ENCODE measurements at regions of chr11 and their contacts with region 1.

Region 1: GRCh38 chr11:77127232-77127911 is 674 bp upstream of the MYO7A start:
- DNase-seq: peak; percentile 64
- ATAC-seq: peak; percentile 87
- H3K4me3 Mint-ChIP-seq: no peak overlapping the region
- H3K27ac Mint-ChIP-seq: no peak overlapping the region
- H3K4me1 Mint-ChIP-seq: peaks cover 3% of the 10 kb centered on the region
- H3K27me3 Mint-ChIP-seq: peaks cover 13% of the 10 kb centered on the region

Region 2: GRCh38 chr11:77107950-77108349 is 19.4 kb before region 1 on chr11:
- CTCF ChIA-PET with region 1: interaction called, 15 read pairs
- DNase-seq: no peak
- ATAC-seq: no peak
- H3K4me3 Mint-ChIP-seq: no peak overlapping the region
- H3K27ac Mint-ChIP-seq: no peak overlapping the region
- H3K4me1 Mint-ChIP-seq: no peaks in the 10 kb centered on the region
- H3K27me3 Mint-ChIP-seq: peaks cover 3% of the 10 kb centered on the region

Region 3: DNA sequence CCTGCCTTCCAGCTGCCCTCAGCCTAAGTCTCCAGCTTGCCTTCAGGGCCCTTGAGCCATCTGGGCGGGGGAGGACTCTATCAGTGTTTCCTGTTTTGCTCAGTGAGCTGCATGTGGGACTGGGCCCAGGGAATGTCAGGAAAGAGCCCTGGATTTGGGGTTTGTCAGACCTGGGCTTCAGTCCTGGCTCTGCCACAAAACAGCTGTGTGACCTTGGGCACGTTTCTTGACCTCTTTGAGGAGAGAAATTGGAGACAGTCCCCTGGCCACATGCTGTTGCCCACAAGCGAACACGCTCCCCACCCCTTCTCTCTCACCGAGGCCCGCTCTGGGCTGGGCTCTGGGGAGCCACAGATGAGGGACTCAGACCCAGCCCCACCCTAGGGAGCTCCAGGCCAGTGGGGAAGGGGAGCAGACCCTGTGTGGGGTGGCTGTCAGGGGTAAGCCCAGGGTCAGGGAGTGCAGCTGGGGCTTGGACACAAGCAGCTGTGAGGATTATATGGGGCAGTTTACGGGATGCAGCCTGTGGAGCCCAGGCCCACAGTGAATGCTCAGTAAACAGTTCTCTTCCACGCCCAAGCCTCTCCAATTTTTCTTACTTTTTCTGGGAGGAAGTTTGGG is 13.0 kb after region 1 on chr11:
- CTCF ChIA-PET with region 1: interaction called, 44 read pairs
- DNase-seq: no peak
- ATAC-seq: no peak
- H3K4me3 Mint-ChIP-seq: no peak overlapping the region
- H3K27ac Mint-ChIP-seq: no peak overlapping the region
- H3K4me1 Mint-ChIP-seq: peaks cover 40% of the 10 kb centered on the region
- H3K27me3 Mint-ChIP-seq: peaks cover 56% of the 10 kb centered on the region

Region 4: DNA sequence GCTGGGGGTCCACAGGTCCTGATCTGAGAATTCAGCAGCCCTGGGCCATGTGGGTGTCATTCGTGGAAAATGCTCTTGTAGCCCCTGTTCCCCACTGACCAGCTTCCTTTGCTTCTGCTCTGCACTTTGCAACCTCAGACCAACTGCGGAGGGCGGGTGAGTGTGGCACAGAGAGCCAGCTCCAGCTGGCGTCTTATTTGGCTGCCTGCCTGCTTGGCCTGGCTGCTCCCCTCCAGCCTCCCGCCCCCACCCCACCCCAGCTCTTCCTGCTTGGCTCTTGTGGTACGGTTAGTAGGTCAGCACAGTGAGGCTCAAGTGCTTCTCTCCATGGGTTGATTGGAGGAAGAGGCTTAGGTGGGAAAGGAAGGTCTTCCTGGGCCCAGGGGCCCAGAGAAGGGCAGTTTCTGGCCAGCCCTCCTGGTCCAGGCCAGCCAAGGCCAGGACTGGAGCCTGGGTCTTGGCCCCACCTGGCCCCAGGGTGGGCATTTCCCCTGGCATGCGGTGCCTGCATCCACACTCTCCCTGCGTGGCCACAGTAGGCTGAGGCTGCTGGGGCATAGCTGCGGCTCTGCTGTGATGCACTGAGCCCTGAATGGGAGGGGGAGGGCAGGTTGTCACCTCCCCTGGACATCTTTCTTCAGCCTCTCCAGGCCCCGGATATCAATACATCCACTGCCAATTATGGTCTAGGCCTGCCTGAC is 27.2 kb after region 1 on chr11:
- CTCF ChIA-PET with region 1: interaction called, 21 read pairs
- DNase-seq: no peak
- ATAC-seq: no peak
- H3K4me3 Mint-ChIP-seq: no peak overlapping the region
- H3K27ac Mint-ChIP-seq: no peak overlapping the region
- H3K4me1 Mint-ChIP-seq: peaks cover 43% of the 10 kb centered on the region
- H3K27me3 Mint-ChIP-seq: peaks cover 29% of the 10 kb centered on the region

Region 5: DNA sequence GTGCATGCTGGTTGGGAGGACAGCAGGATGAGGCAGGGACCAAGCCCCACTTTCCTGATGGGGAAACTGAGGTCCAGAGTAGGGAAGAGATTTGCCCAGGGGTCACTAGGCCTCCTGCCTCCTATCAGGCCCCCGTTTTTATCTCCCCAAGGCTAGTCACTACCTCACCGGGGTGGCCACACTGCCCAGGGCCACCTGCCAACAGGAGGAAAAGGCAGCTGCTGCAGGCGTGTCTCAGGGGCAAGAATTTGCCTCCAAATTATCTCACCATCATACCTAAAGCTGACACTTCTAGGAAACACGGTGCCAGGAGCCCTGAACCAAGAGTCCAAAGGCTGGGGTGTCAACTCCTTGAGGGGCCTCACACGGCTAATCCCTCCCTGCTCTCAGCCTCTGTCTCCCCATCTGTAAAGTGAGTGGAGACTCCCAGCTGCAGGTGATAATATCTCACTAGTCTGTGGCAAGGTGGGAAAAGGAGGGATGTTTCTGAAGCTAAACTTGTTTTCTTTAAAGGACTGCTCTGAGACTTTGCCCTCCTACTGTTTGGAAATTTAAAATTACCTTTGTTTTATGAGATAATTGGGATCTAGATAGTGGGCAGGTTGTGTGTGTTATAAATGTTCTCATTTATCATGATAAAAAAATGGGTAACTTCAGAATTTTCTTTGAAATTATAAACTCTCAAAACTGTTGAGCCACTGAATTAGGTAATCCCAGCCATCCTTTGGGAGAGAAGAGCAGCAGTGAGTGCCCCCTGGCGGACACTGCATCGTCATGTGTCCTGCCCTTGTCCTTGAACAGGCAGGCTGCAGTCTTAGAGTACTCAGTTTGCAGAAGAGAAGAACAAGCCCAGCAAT is 60.6 kb after region 1 on chr11:
- CTCF ChIA-PET with region 1: interaction called, 162 read pairs
- DNase-seq: peak; percentile 83
- ATAC-seq: peak; percentile 84
- H3K4me3 Mint-ChIP-seq: no peak overlapping the region
- H3K27ac Mint-ChIP-seq: no peak overlapping the region
- H3K4me1 Mint-ChIP-seq: peaks cover 9% of the 10 kb centered on the region
- H3K27me3 Mint-ChIP-seq: peaks cover 4% of the 10 kb centered on the region

Region 6: GRCh38 chr11:77547863-77548551 is 420.6 kb after region 1 on chr11:
- CTCF ChIA-PET with region 1: interaction called, 32 read pairs
- DNase-seq: no peak
- ATAC-seq: no peak
- H3K4me3 Mint-ChIP-seq: no peak overlapping the region
- H3K27ac Mint-ChIP-seq: no peak overlapping the region
- H3K4me1 Mint-ChIP-seq: no peaks in the 10 kb centered on the region
- H3K27me3 Mint-ChIP-seq: no peaks in the 10 kb centered on the region

Measured in activated CD8-positive, alpha-beta memory T cell treated with anti-CD3 and anti-CD28 coated beads, Interleukin-2, amount 10 ng/mL, durations not matched to agents 7 days and 5 days (primary cell).